ENCODE measurements at regions of chr4 and their contacts with region 1.

Region 1: DNA sequence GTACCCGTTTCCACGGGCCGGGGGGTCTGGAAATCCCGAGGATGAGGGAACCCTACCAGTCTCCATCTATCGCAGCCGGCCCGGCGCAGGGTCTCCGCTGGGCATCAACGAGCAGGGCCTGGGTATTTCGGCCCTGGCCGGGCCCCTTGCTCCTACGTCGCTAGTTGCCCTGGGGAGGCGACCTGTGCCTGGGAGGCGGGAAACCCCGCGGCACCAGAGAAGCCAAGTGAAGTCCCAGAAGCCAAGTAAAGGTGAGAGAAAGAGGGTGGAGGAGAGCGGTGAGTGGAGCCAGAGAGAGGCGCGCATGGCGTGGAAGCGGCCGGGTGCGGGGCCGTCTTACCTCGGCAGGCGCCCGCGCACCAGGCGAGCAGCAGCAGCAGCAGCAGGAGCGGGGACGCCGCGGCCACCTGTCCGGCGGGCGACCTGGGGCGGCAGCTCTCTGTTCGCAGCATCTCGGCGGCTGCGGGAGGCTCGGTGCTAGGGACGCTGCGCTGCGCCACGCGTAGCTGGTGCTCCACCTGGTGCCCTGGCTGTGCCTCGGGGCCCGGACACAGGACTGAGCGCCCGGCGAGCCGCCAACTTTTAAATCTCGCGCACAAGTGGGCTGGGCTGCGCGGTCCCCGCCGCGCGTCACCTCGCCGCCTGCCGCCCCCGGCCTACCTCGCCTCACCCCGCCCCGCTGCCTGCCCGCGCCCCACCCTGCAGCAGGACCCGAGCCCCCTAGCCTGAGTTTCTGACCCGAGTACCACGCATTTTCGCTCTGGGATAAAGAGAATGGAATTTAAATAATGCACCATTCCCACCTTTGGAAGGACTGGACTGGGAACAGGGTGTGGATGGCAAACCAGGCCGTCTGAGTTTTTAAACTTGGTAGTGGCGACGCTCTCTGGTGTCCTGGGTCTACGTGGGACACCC is at the start of gene NMU:
- DNase-seq: peak; percentile 63 to 89 (median 72)
- ATAC-seq: peak; percentile 80
- H3K4me3 ChIP-seq: peak within 1 kb of the TSS; percentile 90
- H3K27ac ChIP-seq: peak within 1 kb of the TSS; percentile 96
- H3K4me1 ChIP-seq: peaks cover 12 to 20% of the 10 kb centered on the region in 2 experiments
- H3K27me3 ChIP-seq: no peaks in the 10 kb centered on the region
- CTCF ChIP-seq: peak in 2 of 3 experiments; percentile 48 to 56; a peak in 3 of 6 replicates
- EP300 ChIP-seq: no peak
- POLR2A ChIP-seq: peak; percentile 76
- RAD21 ChIP-seq: peak; percentile 17 to 43; a peak in 3 of 4 replicates
- polyA plus RNA-seq, gene NMU: 73.8 to 122 TPM

Region 2: GRCh38 chr4:54675721-54676461 is 960.1 kb before region 1 on chr4:
- CTCF ChIA-PET with region 1: no interaction called
- POLR2A ChIA-PET with region 1: no interaction called
- in situ Hi-C with region 1: no loop called
- intact Hi-C with region 1: no loop called
- DNase-seq: no peak
- ATAC-seq: no peak
- H3K4me3 ChIP-seq: no peak overlapping the region
- H3K27ac ChIP-seq: no peak overlapping the region
- H3K4me1 ChIP-seq: no peaks in the 10 kb centered on the region; a peak in 1 of 5 replicates
- H3K27me3 ChIP-seq: no peaks in the 10 kb centered on the region; a peak in 1 of 5 replicates
- CTCF ChIP-seq: no peak
- EP300 ChIP-seq: no peak
- POLR2A ChIP-seq: no peak
- RAD21 ChIP-seq: no peak

Region 3: DNA sequence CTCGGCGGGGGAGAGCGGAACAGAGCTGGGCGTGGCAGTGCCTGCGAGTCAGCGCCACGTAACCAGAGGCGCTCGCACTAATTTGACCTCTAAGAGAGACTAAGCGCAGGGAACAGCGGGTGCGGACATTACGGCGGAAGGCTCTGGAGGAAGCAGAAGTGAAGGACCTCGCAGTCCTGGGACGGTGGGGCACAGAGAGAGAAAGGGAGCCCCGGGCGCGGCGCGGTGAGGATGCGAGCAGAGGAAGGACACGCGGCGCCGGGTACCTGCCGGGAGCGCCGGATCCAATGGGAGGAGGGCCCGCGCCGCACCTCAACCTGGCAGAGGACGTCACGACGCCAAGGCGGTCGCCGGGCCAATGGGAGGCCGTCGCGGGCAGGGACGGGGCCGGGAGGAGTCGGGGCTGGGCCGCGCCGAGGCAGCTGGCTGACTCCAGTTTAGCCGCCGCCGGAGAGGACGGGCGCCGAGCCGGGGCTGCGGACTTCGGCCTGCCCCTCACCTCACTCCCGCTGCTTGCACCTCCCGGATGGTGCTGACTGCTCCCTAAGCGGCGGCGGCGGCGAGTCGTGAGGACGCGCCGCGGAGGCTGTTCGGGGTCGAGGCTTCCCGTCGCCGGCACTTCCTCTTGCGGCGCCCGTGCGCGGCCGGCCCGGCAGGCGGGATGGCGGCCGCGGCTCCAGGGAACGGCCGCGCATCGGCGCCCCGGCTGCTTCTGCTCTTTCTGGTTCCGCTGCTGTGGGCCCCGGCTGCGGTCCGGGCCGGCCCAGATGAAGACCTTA is 240.3 kb before region 1 on chr4 and contains the start of gene TMEM165:
- CTCF ChIA-PET with region 1: no interaction called
- POLR2A ChIA-PET with region 1: no interaction called
- in situ Hi-C with region 1: no loop called
- intact Hi-C with region 1: loop called (anchors 5 kb)
- DNase-seq: peak; percentile 94 to 96 (median 96)
- ATAC-seq: peak; percentile 92
- H3K4me3 ChIP-seq: peak within 1 kb of the TSS; percentile 97
- H3K27ac ChIP-seq: peak within 1 kb of the TSS; percentile 90
- H3K4me1 ChIP-seq: peaks cover 16 to 26% of the 10 kb centered on the region in 2 experiments; a peak in 4 of 5 replicates
- H3K27me3 ChIP-seq: no peaks in the 10 kb centered on the region
- CTCF ChIP-seq: 0 out of 6 replicates have a peak, but pooled peaks of 1 of the 3 experiments have one; percentile 4
- EP300 ChIP-seq: no peak
- POLR2A ChIP-seq: peak; percentile 91
- RAD21 ChIP-seq: no peak
- polyA plus RNA-seq, gene TMEM165: 21.3 to 27.5 TPM

Region 4: GRCh38 chr4:55424791-55425190 is 211.2 kb before region 1 on chr4:
- CTCF ChIA-PET with region 1: no interaction called
- POLR2A ChIA-PET with region 1: no interaction called
- in situ Hi-C with region 1: no loop called
- intact Hi-C with region 1: no loop called
- DNase-seq: no peak
- ATAC-seq: no peak
- H3K4me3 ChIP-seq: no peak overlapping the region
- H3K27ac ChIP-seq: no peak overlapping the region
- H3K4me1 ChIP-seq: no peaks in the 10 kb centered on the region
- H3K27me3 ChIP-seq: no peaks in the 10 kb centered on the region
- CTCF ChIP-seq: no peak
- EP300 ChIP-seq: no peak
- POLR2A ChIP-seq: no peak
- RAD21 ChIP-seq: no peak

Region 5: GRCh38 chr4:55435141-55435841 is 200.7 kb before region 1 on chr4:
- CTCF ChIA-PET with region 1: no interaction called
- POLR2A ChIA-PET with region 1: no interaction called
- in situ Hi-C with region 1: no loop called
- intact Hi-C with region 1: loop called (anchors 10 kb)
- DNase-seq: peak in 1 of 4 experiments; percentile 13
- ATAC-seq: peak; percentile 41
- H3K4me3 ChIP-seq: no peak overlapping the region
- H3K27ac ChIP-seq: no peak overlapping the region
- H3K4me1 ChIP-seq: peaks cover 9 to 10% of the 10 kb centered on the region in 2 experiments; a peak in 4 of 5 replicates
- H3K27me3 ChIP-seq: no peaks in the 10 kb centered on the region
- CTCF ChIP-seq: peak in 2 of 3 experiments; percentile 11 to 29; a peak in 1 of 6 replicates
- EP300 ChIP-seq: no peak
- POLR2A ChIP-seq: no peak
- RAD21 ChIP-seq: no peak

Region 6: DNA sequence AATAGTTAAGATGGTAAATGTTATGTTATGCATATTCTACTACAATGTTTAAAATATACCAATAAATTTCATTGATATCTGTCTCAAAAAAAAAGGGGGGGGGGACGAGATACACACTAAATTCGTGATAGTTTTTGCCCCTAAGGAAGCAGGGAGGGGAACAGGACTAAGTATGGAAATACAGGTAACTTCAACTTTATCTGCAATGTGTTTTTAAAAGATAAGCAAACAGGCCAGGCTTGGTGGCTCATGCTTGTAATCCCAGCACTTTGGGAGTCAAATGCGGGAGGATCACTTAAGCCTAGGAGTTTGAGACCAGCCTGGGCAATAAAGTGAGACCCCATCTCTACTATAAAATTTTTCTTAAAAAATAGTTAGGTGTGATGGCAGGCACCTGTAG is 75.9 kb before region 1 on chr4:
- CTCF ChIA-PET with region 1: no interaction called
- POLR2A ChIA-PET with region 1: no interaction called
- in situ Hi-C with region 1: no loop called
- intact Hi-C with region 1: no loop called
- DNase-seq: peak; percentile 39 to 75 (median 53)
- ATAC-seq: peak; percentile 92
- H3K4me3 ChIP-seq: no peak overlapping the region
- H3K27ac ChIP-seq: peak overlapping the region; percentile 26; the same call in 1 of the 3 replicates
- H3K4me1 ChIP-seq: peaks cover 0 to 14% of the 10 kb centered on the region in 2 experiments; a peak in 3 of 5 replicates
- H3K27me3 ChIP-seq: no peaks in the 10 kb centered on the region
- CTCF ChIP-seq: no peak
- EP300 ChIP-seq: peak; percentile 68
- POLR2A ChIP-seq: no peak
- RAD21 ChIP-seq: no peak

Region 7: GRCh38 chr4:55675196-55675793 is 39.3 kb after region 1 on chr4:
- CTCF ChIA-PET with region 1: no interaction called
- POLR2A ChIA-PET with region 1: no interaction called
- in situ Hi-C with region 1: no loop called
- intact Hi-C with region 1: no loop called
- DNase-seq: no peak
- ATAC-seq: peak; percentile 20; the same call in 1 of the 3 replicates
- H3K4me3 ChIP-seq: no peak overlapping the region
- H3K27ac ChIP-seq: no peak overlapping the region
- H3K4me1 ChIP-seq: peaks cover 0 to 18% of the 10 kb centered on the region in 2 experiments; a peak in 4 of 5 replicates
- H3K27me3 ChIP-seq: no peaks in the 10 kb centered on the region
- CTCF ChIP-seq: no peak
- EP300 ChIP-seq: no peak
- POLR2A ChIP-seq: no peak
- RAD21 ChIP-seq: no peak

Region 8: DNA sequence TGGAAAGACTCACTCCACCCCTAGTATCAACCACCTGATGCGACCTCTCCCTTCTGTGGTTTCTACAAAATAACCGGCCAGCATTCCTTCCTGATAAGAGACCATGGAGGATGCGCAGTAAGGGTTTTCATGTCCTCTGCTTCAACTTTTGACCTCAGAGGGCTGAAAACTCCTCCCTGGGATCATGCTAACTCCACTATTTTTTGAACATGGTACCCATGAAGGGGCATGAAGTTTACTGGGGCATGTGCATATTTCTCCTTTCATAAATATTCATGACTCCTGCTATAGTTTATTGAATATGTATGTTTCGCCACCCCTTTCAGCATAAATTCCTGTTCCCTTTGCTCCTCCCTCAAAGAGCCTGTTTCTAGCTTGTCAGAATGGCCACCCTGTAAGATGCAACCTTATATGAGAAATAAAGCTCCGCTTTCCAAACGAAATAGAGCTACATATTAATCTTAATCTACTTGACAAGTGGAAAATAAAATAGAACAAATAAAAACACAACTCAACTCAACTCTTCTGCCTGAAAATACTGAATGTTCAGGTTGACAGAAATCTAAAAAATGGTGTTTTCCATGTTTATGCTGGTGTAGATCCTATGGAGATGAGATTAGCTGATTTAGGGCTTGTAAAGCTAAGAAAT is 94.1 kb after region 1 on chr4:
- CTCF ChIA-PET with region 1: no interaction called
- POLR2A ChIA-PET with region 1: interaction called, 8 read pairs
- in situ Hi-C with region 1: loop called (anchors 5 kb)
- intact Hi-C with region 1: loop called (anchors 1 kb)
- DNase-seq: peak; percentile 68 to 96 (median 77)
- ATAC-seq: peak; percentile 92
- H3K4me3 ChIP-seq: peak overlapping the region; percentile 10; the same call in 1 of the 2 replicates
- H3K27ac ChIP-seq: peak overlapping the region; percentile 94
- H3K4me1 ChIP-seq: peaks cover 18 to 48% of the 10 kb centered on the region in 2 experiments
- H3K27me3 ChIP-seq: no peaks in the 10 kb centered on the region
- CTCF ChIP-seq: no peak
- EP300 ChIP-seq: peak; percentile 100
- POLR2A ChIP-seq: peak; percentile 53; the same call in 1 of the 2 replicates
- RAD21 ChIP-seq: peak in 1 of 2 experiments; percentile 20; a peak in 1 of 4 replicates